Activated CD8-positive, alpha-beta T cell treated with anti-CD3 and anti-CD28 coated beads for 36 hours (primary cell): ENCODE measurements at regions of chr2 and their contacts with region 1.

Region 1: GRCh38 chr2:102020596-102021181 is 28.9 kb downstream of the IL1R2 start:
- DNase-seq: peak; percentile 90
- ATAC-seq: peak; percentile 100
- H3K4me3 Mint-ChIP-seq: no peak overlapping the region
- H3K27ac Mint-ChIP-seq: no peak overlapping the region
- H3K4me1 Mint-ChIP-seq: peaks cover 9% of the 10 kb centered on the region
- H3K27me3 Mint-ChIP-seq: peaks cover 4% of the 10 kb centered on the region
- CTCF ChIP-seq: peak; percentile 99

Region 2: GRCh38 chr2:102005989-102006885 is 14.5 kb before region 1 on chr2:
- CTCF ChIA-PET with region 1: interaction called, 44 read pairs
- POLR2A ChIA-PET with region 1: interaction called, 4 read pairs
- intact Hi-C with region 1: no loop called
- DNase-seq: peak; percentile 54
- ATAC-seq: peak; percentile 65
- H3K4me3 Mint-ChIP-seq: no peak overlapping the region
- H3K27ac Mint-ChIP-seq: no peak overlapping the region
- H3K4me1 Mint-ChIP-seq: peaks cover 14% of the 10 kb centered on the region
- H3K27me3 Mint-ChIP-seq: no peaks in the 10 kb centered on the region
- CTCF ChIP-seq: peak; percentile 64

Region 3: GRCh38 chr2:102057502-102058292 is 37.0 kb after region 1 on chr2:
- CTCF ChIA-PET with region 1: interaction called, 16 read pairs
- POLR2A ChIA-PET with region 1: no interaction called
- intact Hi-C with region 1: no loop called
- DNase-seq: peak; percentile 47
- ATAC-seq: no peak
- H3K4me3 Mint-ChIP-seq: no peak overlapping the region
- H3K27ac Mint-ChIP-seq: no peak overlapping the region
- H3K4me1 Mint-ChIP-seq: peaks cover 16% of the 10 kb centered on the region
- H3K27me3 Mint-ChIP-seq: no peaks in the 10 kb centered on the region
- CTCF ChIP-seq: no peak

Region 4: GRCh38 chr2:102114290-102114721 is 93.6 kb after region 1 on chr2:
- CTCF ChIA-PET with region 1: interaction called, 17 read pairs
- POLR2A ChIA-PET with region 1: no interaction called
- intact Hi-C with region 1: no loop called
- DNase-seq: no peak
- ATAC-seq: peak; percentile 79
- H3K4me3 Mint-ChIP-seq: no peak overlapping the region
- H3K27ac Mint-ChIP-seq: no peak overlapping the region
- H3K4me1 Mint-ChIP-seq: peaks cover 41% of the 10 kb centered on the region
- H3K27me3 Mint-ChIP-seq: peaks cover 4% of the 10 kb centered on the region
- CTCF ChIP-seq: no peak

Region 5: GRCh38 chr2:102166189-102166845 is 145.6 kb after region 1 on chr2:
- CTCF ChIA-PET with region 1: interaction called, 14 read pairs
- POLR2A ChIA-PET with region 1: no interaction called
- intact Hi-C with region 1: no loop called
- DNase-seq: peak; percentile 14
- ATAC-seq: no peak
- H3K4me3 Mint-ChIP-seq: no peak overlapping the region
- H3K27ac Mint-ChIP-seq: no peak overlapping the region
- H3K4me1 Mint-ChIP-seq: peaks cover 5% of the 10 kb centered on the region
- H3K27me3 Mint-ChIP-seq: no peaks in the 10 kb centered on the region
- CTCF ChIP-seq: no peak

Region 6: DNA sequence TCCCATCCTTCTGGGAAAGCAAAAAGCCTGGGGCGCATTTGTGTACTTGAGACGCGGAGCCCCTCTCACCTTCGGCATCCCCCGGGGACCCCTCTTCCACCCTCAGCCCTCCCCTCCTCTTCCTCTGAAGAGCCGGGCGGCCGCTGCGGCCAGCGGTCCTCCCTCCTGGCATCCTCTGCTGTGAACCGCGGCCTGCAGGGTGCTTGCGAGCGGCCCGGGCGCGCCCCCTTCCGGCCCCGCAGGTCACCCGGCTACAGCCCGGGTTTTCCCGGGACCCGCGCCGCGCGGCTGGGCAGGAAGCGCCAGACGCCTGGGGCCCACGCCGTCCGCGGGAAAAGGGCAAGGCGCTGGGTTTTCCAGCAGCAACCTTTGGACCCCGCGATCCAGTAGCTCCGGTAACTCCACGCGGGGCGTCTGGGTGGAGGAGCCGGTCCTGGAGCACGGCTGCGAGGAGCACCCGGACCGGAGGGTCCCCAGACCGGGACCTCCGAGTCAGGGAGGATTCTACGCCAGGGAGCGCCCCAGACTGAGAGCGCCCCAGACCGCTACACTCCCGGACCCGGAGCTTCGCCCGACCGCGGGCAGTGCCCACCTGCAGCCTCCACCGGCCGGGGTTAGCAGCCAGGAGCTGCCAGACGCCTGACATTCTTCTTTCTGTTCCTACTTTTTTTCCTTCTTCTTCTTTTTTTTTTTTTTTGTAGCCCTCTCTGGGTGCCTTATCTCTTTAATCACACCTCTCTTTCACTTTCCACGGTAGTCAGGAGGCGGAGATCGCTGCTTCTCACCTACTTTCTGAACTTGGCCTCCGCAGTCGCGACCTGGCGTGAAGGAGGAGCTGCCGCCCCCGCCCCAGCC is 335.1 kb after region 1 on chr2 and contains the start of gene IL18R1:
- CTCF ChIA-PET with region 1: interaction called, 4 read pairs
- POLR2A ChIA-PET with region 1: no interaction called
- intact Hi-C with region 1: loop called (anchors 5 kb)
- DNase-seq: peak; percentile 81
- ATAC-seq: peak; percentile 82
- H3K4me3 Mint-ChIP-seq: peak within 1 kb of the TSS; percentile 96
- H3K27ac Mint-ChIP-seq: peak within 1 kb of the TSS; percentile 98
- H3K4me1 Mint-ChIP-seq: peaks cover 36% of the 10 kb centered on the region
- H3K27me3 Mint-ChIP-seq: no peaks in the 10 kb centered on the region
- CTCF ChIP-seq: peak; percentile 84
- total RNA-seq, gene IL18R1: 15.0 to 15.8 TPM